Activated naive CD4-positive, alpha-beta T cell treated with anti-CD3 and anti-CD28 coated beads for 36 hours (primary cell): ENCODE measurements at regions of chr17 and their contacts with region 1.

Region 1: GRCh38 chr17:42112552-42113176 is at the start of gene DHX58:
- DNase-seq: peak; percentile 90
- H3K4me3 Mint-ChIP-seq: peak within 1 kb of the TSS; percentile 81
- H3K27ac Mint-ChIP-seq: peak within 1 kb of the TSS; percentile 92
- H3K4me1 Mint-ChIP-seq: peaks cover 38% of the 10 kb centered on the region
- H3K27me3 Mint-ChIP-seq: no peaks in the 10 kb centered on the region
- total RNA-seq, gene DHX58: 44.4 to 46.3 TPM

Region 2: DNA sequence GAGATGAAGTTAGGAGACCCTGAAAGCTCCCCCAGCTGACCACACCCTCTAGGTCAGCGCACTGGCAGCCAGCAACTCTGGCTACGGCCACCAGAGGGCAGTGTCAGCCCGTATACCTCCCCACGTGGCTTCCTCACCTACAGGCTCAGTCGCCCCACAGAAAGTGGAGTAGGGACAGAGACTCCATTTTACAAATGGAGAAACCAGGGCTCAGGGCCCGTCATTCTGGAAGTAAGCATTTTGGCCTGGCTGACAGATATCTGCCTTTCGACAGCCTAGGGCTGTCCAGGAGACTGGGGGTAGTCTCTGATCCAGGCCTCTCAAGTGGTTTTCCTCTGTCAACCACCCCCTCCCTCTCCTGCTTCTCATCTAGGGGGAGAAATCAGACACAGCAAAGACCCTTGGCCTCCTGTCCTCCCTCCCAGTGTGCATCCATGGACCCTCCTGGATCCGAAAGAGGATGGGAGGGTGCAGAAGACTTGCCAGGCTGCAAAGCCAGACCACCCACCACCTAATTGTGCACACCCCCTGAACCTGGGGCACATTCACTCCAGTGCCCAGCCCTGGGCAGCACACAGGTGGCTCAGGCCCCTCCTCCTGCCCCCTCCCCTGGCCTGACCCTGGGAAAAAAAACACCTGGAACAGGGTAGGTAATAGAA is 374.5 kb before region 1 on chr17:
- CTCF ChIA-PET with region 1: no interaction called
- intact Hi-C with region 1: loop called (anchors 1 kb)
- DNase-seq: peak; percentile 91
- H3K4me3 Mint-ChIP-seq: no peak overlapping the region
- H3K27ac Mint-ChIP-seq: no peak overlapping the region
- H3K4me1 Mint-ChIP-seq: peaks cover 2% of the 10 kb centered on the region
- H3K27me3 Mint-ChIP-seq: peaks cover 29% of the 10 kb centered on the region

Region 3: GRCh38 chr17:41966463-41967140 is 146.1 kb before region 1 on chr17 and contains the start of gene CNP:
- CTCF ChIA-PET with region 1: interaction called, 29 read pairs
- intact Hi-C with region 1: loop called (anchors 1 kb)
- DNase-seq: peak; percentile 88
- H3K4me3 Mint-ChIP-seq: peak within 1 kb of the TSS; percentile 80
- H3K27ac Mint-ChIP-seq: peak within 1 kb of the TSS; percentile 86
- H3K4me1 Mint-ChIP-seq: peaks cover 38% of the 10 kb centered on the region
- H3K27me3 Mint-ChIP-seq: no peaks in the 10 kb centered on the region
- total RNA-seq, gene CNP: 58.4 to 59.1 TPM

Region 4: GRCh38 chr17:42067351-42068091 is 45.1 kb before region 1 on chr17:
- CTCF ChIA-PET with region 1: interaction called, 38 read pairs
- intact Hi-C with region 1: loop called (anchors 1 kb)
- DNase-seq: peak; percentile 83
- H3K4me3 Mint-ChIP-seq: no peak overlapping the region
- H3K27ac Mint-ChIP-seq: no peak overlapping the region
- H3K4me1 Mint-ChIP-seq: peaks cover 22% of the 10 kb centered on the region
- H3K27me3 Mint-ChIP-seq: peaks cover 15% of the 10 kb centered on the region

Region 5: DNA sequence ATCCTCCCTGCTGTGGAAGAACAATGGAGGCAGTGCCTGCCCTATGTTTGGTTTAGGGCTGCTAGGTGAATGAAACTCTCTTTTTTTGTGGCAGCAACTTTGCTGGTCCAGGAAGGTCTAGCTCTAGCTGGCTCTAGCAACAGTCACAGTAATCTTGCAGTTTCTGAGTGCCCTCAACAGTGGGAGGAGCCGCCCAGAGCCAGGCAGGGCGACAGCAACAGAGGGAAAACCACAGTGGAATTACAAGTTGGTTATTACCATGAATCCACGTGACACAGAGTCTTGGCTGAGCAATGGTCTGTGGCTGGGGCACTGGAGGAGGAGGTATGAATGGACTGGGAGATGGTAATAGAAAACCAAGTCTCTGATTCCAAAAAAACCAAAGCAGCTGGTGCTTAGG is 20.3 kb after region 1 on chr17:
- CTCF ChIA-PET with region 1: interaction called, 14 read pairs
- intact Hi-C with region 1: loop called (anchors 1 kb)
- DNase-seq: peak; percentile 55
- H3K4me3 Mint-ChIP-seq: no peak overlapping the region
- H3K27ac Mint-ChIP-seq: peak overlapping the region; percentile 60
- H3K4me1 Mint-ChIP-seq: peaks cover 56% of the 10 kb centered on the region
- H3K27me3 Mint-ChIP-seq: no peaks in the 10 kb centered on the region

Region 6: GRCh38 chr17:42527273-42527703 is 414.6 kb after region 1 on chr17:
- CTCF ChIA-PET with region 1: interaction called, 3 read pairs
- intact Hi-C with region 1: loop called (anchors 10 kb)
- DNase-seq: peak; percentile 86
- H3K4me3 Mint-ChIP-seq: no peak overlapping the region
- H3K27ac Mint-ChIP-seq: no peak overlapping the region
- H3K4me1 Mint-ChIP-seq: peaks cover 32% of the 10 kb centered on the region
- H3K27me3 Mint-ChIP-seq: no peaks in the 10 kb centered on the region